ENCODE measurements at regions of chr6 and their contacts with region 1.

Region 1: DNA sequence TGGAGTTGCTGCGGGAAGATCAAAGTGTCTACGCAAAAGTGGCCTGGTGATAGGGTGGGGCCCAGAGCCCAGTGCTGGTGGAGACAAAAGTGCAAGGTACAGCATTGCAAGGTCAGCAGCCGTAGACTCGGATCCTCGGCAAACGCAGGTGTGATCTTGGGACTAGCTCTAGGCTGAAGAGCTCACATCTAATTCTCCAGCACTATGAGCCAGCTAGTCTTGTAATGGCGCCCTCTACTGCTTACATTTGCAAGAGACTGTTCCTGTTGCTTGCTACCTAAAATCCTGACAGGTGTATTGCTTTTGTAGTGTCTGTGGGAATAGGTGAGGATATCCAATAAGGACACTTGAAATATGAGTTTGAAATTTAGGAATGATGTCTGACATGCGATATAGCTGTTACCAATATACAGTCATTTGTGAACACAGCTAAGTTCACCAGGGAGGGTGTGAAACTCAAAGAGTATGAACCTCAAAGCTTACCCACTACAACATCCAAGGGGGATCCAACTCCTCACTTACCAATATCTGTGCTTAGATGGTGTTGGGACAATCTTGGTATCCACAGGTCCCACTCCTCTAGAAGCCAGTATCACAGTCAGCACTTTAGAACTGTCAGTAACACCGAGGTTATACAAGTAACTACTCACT is 58.4 kb downstream of the PDE7B start:
- DNase-seq: peak; percentile 60
- H3K4me3 Mint-ChIP-seq: no peak overlapping the region
- H3K27ac Mint-ChIP-seq: no peak overlapping the region
- H3K4me1 Mint-ChIP-seq: peaks cover 3% of the 10 kb centered on the region
- H3K27me3 Mint-ChIP-seq: no peaks in the 10 kb centered on the region

Region 2: GRCh38 chr6:135411339-135411738 is 498.5 kb before region 1 on chr6:
- CTCF ChIA-PET with region 1: no interaction called
- POLR2A ChIA-PET with region 1: no interaction called
- DNase-seq: no peak
- H3K4me3 Mint-ChIP-seq: no peak overlapping the region
- H3K27ac Mint-ChIP-seq: no peak overlapping the region
- H3K4me1 Mint-ChIP-seq: no peaks in the 10 kb centered on the region
- H3K27me3 Mint-ChIP-seq: no peaks in the 10 kb centered on the region

Region 3: GRCh38 chr6:135535989-135536414 is 373.9 kb before region 1 on chr6:
- CTCF ChIA-PET with region 1: interaction called, 67 read pairs
- POLR2A ChIA-PET with region 1: no interaction called
- DNase-seq: no peak
- H3K4me3 Mint-ChIP-seq: no peak overlapping the region
- H3K27ac Mint-ChIP-seq: peak overlapping the region; percentile 67
- H3K4me1 Mint-ChIP-seq: peaks cover 49% of the 10 kb centered on the region
- H3K27me3 Mint-ChIP-seq: no peaks in the 10 kb centered on the region

Region 4: GRCh38 chr6:135851442-135852271 is 58.2 kb before region 1 on chr6 and contains the start of gene PDE7B:
- CTCF ChIA-PET with region 1: interaction called, 10 read pairs
- POLR2A ChIA-PET with region 1: no interaction called
- DNase-seq: peak; percentile 51
- H3K4me3 Mint-ChIP-seq: peak within 1 kb of the TSS; percentile 49
- H3K27ac Mint-ChIP-seq: no peak within 1 kb of the TSS
- H3K4me1 Mint-ChIP-seq: peaks cover 10% of the 10 kb centered on the region
- H3K27me3 Mint-ChIP-seq: peaks cover 1% of the 10 kb centered on the region
- total RNA-seq, gene PDE7B: 0.68 to 0.95 TPM

Region 5: DNA sequence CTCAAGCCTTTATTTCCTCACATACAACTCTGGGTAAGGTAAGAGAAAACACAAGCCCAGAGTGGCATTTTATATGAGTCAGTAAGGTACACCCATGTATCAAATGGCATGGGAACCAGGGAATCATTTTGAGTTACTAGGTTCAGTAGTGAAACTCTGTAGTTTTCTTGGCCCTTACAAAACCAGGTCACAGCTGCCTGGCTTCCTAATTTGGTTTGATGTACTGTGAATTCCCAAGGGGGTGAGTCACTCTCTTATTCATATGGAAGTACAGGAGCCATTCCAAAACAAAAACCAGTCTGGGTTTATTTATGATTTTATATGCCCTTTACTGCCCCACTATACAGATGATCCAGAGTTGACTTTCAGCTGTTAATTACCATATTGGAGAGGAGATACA is 12.3 kb after region 1 on chr6:
- CTCF ChIA-PET with region 1: interaction called, 10 read pairs
- POLR2A ChIA-PET with region 1: no interaction called
- DNase-seq: no peak
- H3K4me3 Mint-ChIP-seq: no peak overlapping the region
- H3K27ac Mint-ChIP-seq: no peak overlapping the region
- H3K4me1 Mint-ChIP-seq: no peaks in the 10 kb centered on the region
- H3K27me3 Mint-ChIP-seq: peaks cover 3% of the 10 kb centered on the region